ENCODE measurements at regions of chr14 and their contacts with region 1.

Region 1: DNA sequence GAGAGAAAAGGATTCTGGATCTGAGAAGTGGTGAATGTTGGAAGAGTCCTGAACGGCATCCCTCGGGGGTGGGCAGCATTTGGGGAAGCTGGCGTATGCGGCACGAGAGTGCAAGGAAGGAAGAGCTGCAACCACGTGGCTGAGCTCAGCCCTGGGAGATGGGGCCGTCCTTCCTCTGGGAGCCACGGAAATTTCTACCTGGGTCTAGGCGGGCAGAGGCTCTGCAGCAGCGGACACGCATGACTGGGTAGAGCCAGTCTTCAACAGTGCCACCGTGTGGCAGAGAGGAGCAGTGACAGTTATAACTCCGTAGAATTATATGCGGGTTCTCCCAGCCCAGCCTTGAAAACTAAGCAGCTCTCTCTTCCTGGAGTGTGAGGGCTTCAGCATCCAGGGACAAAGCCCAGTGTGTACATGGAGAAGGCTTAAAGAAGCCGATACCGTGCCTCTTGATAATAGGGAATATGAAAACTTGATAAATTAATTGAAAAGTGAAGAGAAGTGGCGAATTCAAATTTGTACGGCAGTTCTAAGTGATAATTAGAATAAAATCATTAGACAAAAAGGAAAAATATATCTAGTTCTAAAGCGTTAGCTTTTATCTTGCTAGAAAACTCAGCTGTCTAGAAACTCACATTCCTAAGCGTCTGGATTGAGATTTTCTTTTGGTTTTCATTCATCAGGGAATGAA is 82.9 kb upstream of the STXBP6 start:
- DNase-seq: peak; percentile 76
- ATAC-seq: peak; percentile 97
- H3K4me3 Mint-ChIP-seq: peak overlapping the region; percentile 34
- H3K27ac Mint-ChIP-seq: no peak overlapping the region
- H3K4me1 Mint-ChIP-seq: peaks cover 4% of the 10 kb centered on the region
- H3K27me3 Mint-ChIP-seq: peaks cover 24% of the 10 kb centered on the region
- CTCF ChIP-seq: peak; percentile 68

Region 2: GRCh38 chr14:24817212-24818057 is 315.4 kb before region 1 on chr14:
- CTCF ChIA-PET with region 1: interaction called, 11 read pairs
- POLR2A ChIA-PET with region 1: no interaction called
- DNase-seq: no peak
- ATAC-seq: peak; percentile 59
- H3K4me3 Mint-ChIP-seq: no peak overlapping the region
- H3K27ac Mint-ChIP-seq: no peak overlapping the region
- H3K4me1 Mint-ChIP-seq: peaks cover 1% of the 10 kb centered on the region
- H3K27me3 Mint-ChIP-seq: no peaks in the 10 kb centered on the region
- CTCF ChIP-seq: no peak

Region 3: DNA sequence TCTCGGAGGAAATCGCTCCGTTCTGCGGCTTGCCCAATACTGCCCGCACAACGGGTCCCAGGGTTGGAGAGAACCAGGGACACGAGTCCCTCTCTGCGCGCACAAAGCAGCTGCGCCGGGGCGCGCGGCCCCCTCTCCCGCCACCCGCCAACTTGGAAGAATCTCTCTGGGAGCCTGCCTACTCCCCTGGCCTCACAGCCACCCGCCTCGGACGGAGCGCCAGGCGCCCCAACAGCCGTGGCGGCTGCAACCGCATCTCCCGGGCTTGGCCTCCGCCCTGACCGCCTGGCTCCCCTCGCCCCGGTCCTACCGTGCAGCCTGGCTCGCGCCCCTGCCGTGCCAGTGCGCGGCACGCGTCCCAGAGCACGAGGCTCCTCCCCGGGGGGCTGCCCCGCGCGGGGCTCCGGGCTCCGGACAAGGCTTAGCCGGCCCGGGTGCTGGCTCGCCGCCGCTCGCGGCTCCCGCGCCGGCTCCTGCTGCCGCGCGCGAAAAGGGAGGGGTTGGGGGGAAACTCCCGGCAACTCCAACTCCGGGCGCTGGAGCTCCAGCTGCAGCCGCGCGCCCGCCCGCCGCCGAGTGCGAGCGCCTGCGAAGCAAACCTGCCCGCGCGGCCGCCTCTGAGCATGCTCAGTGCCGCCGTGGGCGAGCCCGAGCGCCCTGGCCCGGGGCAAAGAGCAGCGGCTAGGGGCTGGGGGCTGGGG is 83.2 kb before region 1 on chr14 and contains the start of gene STXBP6:
- CTCF ChIA-PET with region 1: interaction called, 14 read pairs
- POLR2A ChIA-PET with region 1: no interaction called
- DNase-seq: peak; percentile 74
- ATAC-seq: peak; percentile 75
- H3K4me3 Mint-ChIP-seq: peak within 1 kb of the TSS; percentile 85
- H3K27ac Mint-ChIP-seq: no peak within 1 kb of the TSS
- H3K4me1 Mint-ChIP-seq: peaks cover 32% of the 10 kb centered on the region
- H3K27me3 Mint-ChIP-seq: peaks cover 58% of the 10 kb centered on the region
- CTCF ChIP-seq: no peak
- total RNA-seq, gene STXBP6: 3.2 to 4.2 TPM (median 3.5 TPM) in 3 replicates

Region 4: GRCh38 chr14:25111061-25111601 is 21.7 kb before region 1 on chr14:
- CTCF ChIA-PET with region 1: interaction called, 16 read pairs
- POLR2A ChIA-PET with region 1: no interaction called
- DNase-seq: no peak
- ATAC-seq: no peak
- H3K4me3 Mint-ChIP-seq: no peak overlapping the region
- H3K27ac Mint-ChIP-seq: no peak overlapping the region
- H3K4me1 Mint-ChIP-seq: no peaks in the 10 kb centered on the region
- H3K27me3 Mint-ChIP-seq: no peaks in the 10 kb centered on the region
- CTCF ChIP-seq: no peak

Region 5: GRCh38 chr14:25400607-25401206 is 267.8 kb after region 1 on chr14:
- CTCF ChIA-PET with region 1: interaction called, 14 read pairs
- POLR2A ChIA-PET with region 1: no interaction called
- DNase-seq: peak; percentile 49
- ATAC-seq: peak; percentile 59
- H3K4me3 Mint-ChIP-seq: no peak overlapping the region
- H3K27ac Mint-ChIP-seq: no peak overlapping the region
- H3K4me1 Mint-ChIP-seq: peaks cover 6% of the 10 kb centered on the region
- H3K27me3 Mint-ChIP-seq: no peaks in the 10 kb centered on the region
- CTCF ChIP-seq: peak; percentile 58

Region 6: GRCh38 chr14:25607192-25607591 is 474.3 kb after region 1 on chr14:
- CTCF ChIA-PET with region 1: no interaction called
- POLR2A ChIA-PET with region 1: no interaction called
- DNase-seq: no peak
- ATAC-seq: peak; percentile 65; the same call in 1 of the 2 replicates
- H3K4me3 Mint-ChIP-seq: peak overlapping the region; percentile 16; the same call in 1 of the 2 replicates
- H3K27ac Mint-ChIP-seq: no peak overlapping the region
- H3K4me1 Mint-ChIP-seq: peaks cover 17% of the 10 kb centered on the region
- H3K27me3 Mint-ChIP-seq: peaks cover 22% of the 10 kb centered on the region
- CTCF ChIP-seq: no peak

Measured in WTC11 (cell line).